HEK293 (cell line): ENCODE measurements at regions of chr12 and their contacts with region 1.

Region 1: GRCh38 chr12:1117970-1118563 is 127.0 kb downstream of the ERC1 start:
- H3K4me3 ChIP-seq: no peak overlapping the region
- H3K27ac ChIP-seq: no peak overlapping the region
- H3K4me1 ChIP-seq: no peaks in the 10 kb centered on the region
- CTCF ChIP-seq: peak; percentile 75

Region 2: DNA sequence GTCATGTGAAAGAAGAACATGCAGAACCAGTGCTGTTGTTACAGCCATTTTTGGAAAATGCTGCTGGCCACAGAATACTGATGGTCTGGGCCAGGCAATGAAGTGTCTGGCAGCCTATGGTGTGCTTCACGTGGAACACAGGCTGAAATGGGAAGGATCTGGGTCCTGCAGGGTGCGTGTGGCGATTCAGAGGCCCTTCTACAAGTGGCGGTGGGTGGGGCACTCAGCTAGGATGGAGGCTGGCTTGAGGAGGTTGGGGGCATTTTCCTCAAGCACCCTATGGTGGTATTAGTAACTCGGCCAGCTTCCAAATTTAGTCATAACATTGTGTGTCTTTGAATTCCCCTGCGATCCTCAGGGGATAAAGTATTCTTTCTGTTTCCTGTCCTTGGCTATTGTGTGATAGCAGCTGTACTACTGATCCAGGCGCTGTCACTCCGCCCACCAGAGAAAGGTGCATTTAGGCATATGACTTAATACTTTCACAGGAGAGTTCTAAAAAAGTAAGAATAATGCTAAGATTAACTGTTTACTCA is 159.4 kb before region 1 on chr12:
- CTCF ChIA-PET with region 1: no interaction called
- POLR2A ChIA-PET with region 1: no interaction called
- H3K4me3 ChIP-seq: no peak overlapping the region
- H3K27ac ChIP-seq: no peak overlapping the region
- H3K4me1 ChIP-seq: 0 out of 2 replicates have a peak, but pooled peaks cover 3% of the 10 kb centered on the region
- CTCF ChIP-seq: no peak

Region 3: GRCh38 chr12:998020-998874 is 119.8 kb before region 1 on chr12:
- CTCF ChIA-PET with region 1: no interaction called
- POLR2A ChIA-PET with region 1: no interaction called
- H3K4me3 ChIP-seq: no peak overlapping the region
- H3K27ac ChIP-seq: no peak overlapping the region
- H3K4me1 ChIP-seq: no peaks in the 10 kb centered on the region
- CTCF ChIP-seq: no peak

Region 4: GRCh38 chr12:1093166-1093751 is 24.8 kb before region 1 on chr12:
- CTCF ChIA-PET with region 1: interaction called, 11 read pairs
- POLR2A ChIA-PET with region 1: no interaction called
- H3K4me3 ChIP-seq: no peak overlapping the region
- H3K27ac ChIP-seq: no peak overlapping the region
- H3K4me1 ChIP-seq: 0 out of 2 replicates have a peak, but pooled peaks cover 5% of the 10 kb centered on the region
- CTCF ChIP-seq: no peak; the same call in 1 of the 2 replicates

Region 5: DNA sequence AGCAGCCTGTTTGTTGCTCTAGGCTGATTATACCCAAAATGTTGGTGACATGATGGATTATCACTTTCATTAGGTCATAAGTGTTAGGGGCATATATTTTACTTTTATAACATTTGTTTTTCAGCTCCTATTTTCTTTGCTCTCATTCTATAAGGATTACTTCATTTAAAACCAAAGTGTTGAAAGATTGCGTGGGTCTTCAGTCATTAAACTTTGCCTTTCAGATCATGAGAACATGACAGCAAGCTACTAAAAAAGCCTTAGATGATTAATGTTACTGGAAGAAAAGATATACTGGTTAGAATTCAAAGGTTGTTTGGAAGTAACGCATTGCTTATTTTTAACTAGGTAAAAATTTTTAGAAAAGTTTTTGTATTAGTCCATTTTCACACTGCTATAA is 29.8 kb after region 1 on chr12:
- CTCF ChIA-PET with region 1: interaction called, 11 read pairs
- POLR2A ChIA-PET with region 1: interaction called, 3 read pairs
- H3K4me3 ChIP-seq: no peak overlapping the region
- H3K27ac ChIP-seq: no peak overlapping the region
- H3K4me1 ChIP-seq: no peaks in the 10 kb centered on the region
- CTCF ChIP-seq: no peak

Region 6: GRCh38 chr12:1322821-1323220 is 204.8 kb after region 1 on chr12:
- CTCF ChIA-PET with region 1: interaction called, 10 read pairs
- POLR2A ChIA-PET with region 1: interaction called, 4 read pairs
- H3K4me3 ChIP-seq: no peak overlapping the region
- H3K27ac ChIP-seq: no peak overlapping the region
- H3K4me1 ChIP-seq: peaks cover 6% of the 10 kb centered on the region
- CTCF ChIP-seq: no peak

Region 7: GRCh38 chr12:1594261-1595025 is 476.4 kb after region 1 on chr12 and contains the start of gene FBXL14:
- CTCF ChIA-PET with region 1: interaction called, 19 read pairs
- POLR2A ChIA-PET with region 1: interaction called, 6 read pairs
- H3K4me3 ChIP-seq: peak within 1 kb of the TSS; percentile 78
- H3K27ac ChIP-seq: peak within 1 kb of the TSS; percentile 97
- H3K4me1 ChIP-seq: peaks cover 18% of the 10 kb centered on the region
- CTCF ChIP-seq: no peak; the same call in none of the 2 replicates

Region 8: GRCh38 chr12:1795785-1796514 is 677.9 kb after region 1 on chr12:
- CTCF ChIA-PET with region 1: interaction called, 11 read pairs
- POLR2A ChIA-PET with region 1: no interaction called
- H3K4me3 ChIP-seq: peak overlapping the region; percentile 22
- H3K27ac ChIP-seq: no peak overlapping the region
- H3K4me1 ChIP-seq: no peaks in the 10 kb centered on the region; the same call in 1 of the 2 replicates
- CTCF ChIP-seq: peak; percentile 79